ENCODE measurements at regions of chr7 and their contacts with region 1.

Region 1: DNA sequence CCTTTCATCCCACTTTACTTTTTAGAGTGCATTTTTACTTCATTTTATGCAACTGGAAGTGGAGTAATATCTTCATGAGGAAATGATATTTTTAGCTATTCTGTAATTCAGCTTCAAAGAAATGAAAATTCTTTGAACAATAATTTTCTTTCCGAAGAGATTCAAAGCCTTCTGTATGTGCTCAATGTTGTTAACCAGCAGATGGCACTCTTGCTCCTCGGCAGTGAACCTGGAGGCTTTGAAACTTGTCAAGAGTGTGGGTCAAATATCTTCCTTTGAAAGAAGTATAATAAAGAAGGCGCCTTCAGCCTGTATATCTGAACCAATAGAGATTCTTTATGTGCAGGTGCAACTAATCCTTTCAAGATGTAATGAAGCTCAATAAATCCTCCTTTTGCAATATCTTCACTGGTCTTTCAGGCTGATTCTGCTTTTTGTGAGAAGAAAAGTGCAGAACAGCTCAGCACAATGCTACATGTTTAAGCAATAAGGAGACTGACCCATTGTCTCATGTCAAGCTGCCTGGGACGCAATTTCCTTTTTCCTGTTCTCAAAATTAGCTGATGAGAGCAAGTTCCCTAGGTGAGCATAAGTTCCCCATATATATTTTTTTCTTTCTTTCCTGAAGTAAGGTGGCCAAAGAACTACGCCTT is 258.4 kb downstream of the SEMA3A start:
- DNase-seq: peak; percentile 19 to 81
- ATAC-seq: peak; percentile 85 to 91; a peak in 5 of 6 replicates
- H3K4me3 ChIP-seq: no peak overlapping the region
- H3K27ac ChIP-seq: peak overlapping the region in 1 of 2 experiments; percentile 7; a peak in 1 of 6 replicates
- H3K4me1 ChIP-seq: no peaks in the 10 kb centered on the region
- CTCF ChIP-seq: peak; percentile 98
- EP300 ChIP-seq: no peak
- POLR2A ChIP-seq: no peak
- RAD21 ChIP-seq: peak; percentile 97

Region 2: GRCh38 chr7:83672157-83672556 is 264.0 kb before region 1 on chr7:
- CTCF ChIA-PET with region 1: no interaction called
- POLR2A ChIA-PET with region 1: no interaction called
- DNase-seq: no peak
- ATAC-seq: no peak
- H3K4me3 ChIP-seq: no peak overlapping the region
- H3K27ac ChIP-seq: no peak overlapping the region
- H3K4me1 ChIP-seq: peaks cover 8% of the 10 kb centered on the region
- CTCF ChIP-seq: no peak
- EP300 ChIP-seq: no peak
- POLR2A ChIP-seq: no peak
- RAD21 ChIP-seq: no peak

Region 3: DNA sequence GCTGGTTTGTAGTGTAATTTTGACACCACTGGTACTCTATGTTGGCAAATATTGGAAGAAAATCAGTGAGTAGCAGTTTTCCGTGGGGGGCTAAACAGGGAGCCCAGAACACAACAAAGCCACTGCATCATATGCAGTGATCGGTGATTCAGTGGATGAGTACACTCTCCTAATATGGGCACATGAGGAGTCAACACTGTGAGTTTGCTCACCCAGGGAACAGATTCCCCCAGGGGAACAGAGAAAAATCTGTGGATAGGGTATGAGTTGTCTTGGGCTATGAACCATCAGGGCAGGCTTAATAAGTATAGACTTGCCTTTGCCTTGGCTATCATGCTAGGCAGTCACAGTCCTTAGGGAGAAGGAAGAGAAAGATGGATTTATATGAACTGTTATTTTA is 59.6 kb before region 1 on chr7:
- CTCF ChIA-PET with region 1: no interaction called
- POLR2A ChIA-PET with region 1: no interaction called
- DNase-seq: no peak
- ATAC-seq: no peak
- H3K4me3 ChIP-seq: no peak overlapping the region
- H3K27ac ChIP-seq: no peak overlapping the region
- H3K4me1 ChIP-seq: no peaks in the 10 kb centered on the region
- CTCF ChIP-seq: no peak
- EP300 ChIP-seq: no peak
- POLR2A ChIP-seq: no peak
- RAD21 ChIP-seq: no peak

Region 4: GRCh38 chr7:83957333-83957732 is 21.2 kb after region 1 on chr7:
- CTCF ChIA-PET with region 1: interaction called, 22 read pairs
- POLR2A ChIA-PET with region 1: no interaction called
- DNase-seq: peak in 1 of 2 experiments; percentile 9
- ATAC-seq: no peak
- H3K4me3 ChIP-seq: no peak overlapping the region
- H3K27ac ChIP-seq: no peak overlapping the region
- H3K4me1 ChIP-seq: no peaks in the 10 kb centered on the region
- CTCF ChIP-seq: no peak
- EP300 ChIP-seq: no peak
- POLR2A ChIP-seq: no peak
- RAD21 ChIP-seq: no peak

Region 5: DNA sequence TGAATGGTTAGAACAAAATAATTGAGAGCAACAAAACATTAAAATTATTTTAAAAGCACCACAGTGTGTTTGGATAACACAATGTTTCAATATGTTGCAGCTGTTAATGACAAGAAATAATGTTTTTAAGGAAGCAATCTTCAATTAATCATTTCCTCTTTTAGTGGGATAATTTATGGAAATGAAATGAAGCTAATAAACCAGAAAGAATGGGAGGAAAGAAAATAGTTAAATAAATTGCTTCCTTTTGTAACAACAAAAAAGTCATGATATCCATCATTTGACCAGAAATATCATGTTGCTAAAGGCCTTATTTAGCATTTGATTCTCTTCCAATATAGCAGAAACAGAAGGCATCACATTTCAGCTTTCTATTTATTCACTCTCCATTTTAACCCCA is 33.9 kb after region 1 on chr7:
- CTCF ChIA-PET with region 1: interaction called, 15 read pairs
- POLR2A ChIA-PET with region 1: no interaction called
- DNase-seq: no peak
- ATAC-seq: no peak
- H3K4me3 ChIP-seq: no peak overlapping the region
- H3K27ac ChIP-seq: no peak overlapping the region
- H3K4me1 ChIP-seq: no peaks in the 10 kb centered on the region
- CTCF ChIP-seq: no peak
- EP300 ChIP-seq: no peak
- POLR2A ChIP-seq: no peak
- RAD21 ChIP-seq: no peak

Region 6: DNA sequence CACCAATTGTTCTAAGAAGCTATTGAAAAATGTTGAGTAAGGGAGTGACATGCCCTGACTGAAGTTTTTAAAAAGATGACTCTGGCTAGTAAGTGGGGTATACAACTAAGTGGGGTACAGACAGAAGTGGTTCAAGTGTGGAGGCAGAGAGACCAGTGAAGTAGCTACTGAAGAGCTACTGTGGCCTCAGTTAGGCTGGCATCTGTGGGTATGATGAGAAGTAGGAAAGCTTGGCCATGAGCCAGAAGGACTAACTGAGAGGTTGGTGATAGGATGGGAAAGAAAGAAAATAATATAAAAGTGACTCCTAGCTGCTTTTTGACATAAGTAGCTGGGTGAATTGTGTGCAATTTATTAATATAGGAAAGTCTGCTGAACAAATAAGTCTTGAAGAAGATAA is 1074.1 kb after region 1 on chr7:
- CTCF ChIA-PET with region 1: interaction called, 28 read pairs
- POLR2A ChIA-PET with region 1: no interaction called
- DNase-seq: no peak
- ATAC-seq: no peak
- H3K4me3 ChIP-seq: no peak overlapping the region
- H3K27ac ChIP-seq: no peak overlapping the region
- H3K4me1 ChIP-seq: 0 out of 3 replicates have a peak, but pooled peaks cover 3% of the 10 kb centered on the region
- CTCF ChIP-seq: no peak
- EP300 ChIP-seq: no peak
- POLR2A ChIP-seq: no peak
- RAD21 ChIP-seq: no peak

Region 7: DNA sequence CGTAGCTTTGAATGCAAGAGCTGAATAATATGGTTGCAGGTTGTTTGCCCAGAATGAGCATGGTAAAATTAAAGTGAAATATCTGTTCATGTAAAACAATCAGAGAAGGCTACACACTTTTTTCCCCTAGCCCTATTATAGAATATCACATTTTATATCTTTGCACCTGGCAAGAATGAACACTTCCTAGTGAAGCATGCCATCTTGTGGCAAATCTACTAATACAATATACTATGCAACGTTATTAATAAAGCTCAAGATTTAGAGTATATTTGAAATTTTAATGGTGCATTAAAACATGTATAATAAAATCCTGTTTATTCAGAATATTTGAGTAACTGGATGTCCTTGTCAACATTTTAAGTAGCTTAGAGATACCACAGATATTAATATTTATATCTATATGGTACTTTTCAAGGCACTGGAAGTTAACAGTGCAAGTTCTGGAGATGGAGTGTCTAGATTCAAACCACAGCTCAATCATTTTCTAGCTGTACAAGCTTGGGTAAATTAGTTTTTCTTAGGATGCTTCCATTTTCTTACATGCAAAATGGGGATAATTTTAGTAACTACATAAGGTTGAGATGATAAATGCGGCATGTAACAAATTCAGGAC is 1893.7 kb after region 1 on chr7:
- CTCF ChIA-PET with region 1: interaction called, 11 read pairs
- POLR2A ChIA-PET with region 1: no interaction called
- DNase-seq: peak in 1 of 2 experiments; percentile 27
- ATAC-seq: peak; percentile 74 to 79; a peak in 4 of 6 replicates
- H3K4me3 ChIP-seq: no peak overlapping the region
- H3K27ac ChIP-seq: no peak overlapping the region
- H3K4me1 ChIP-seq: no peaks in the 10 kb centered on the region
- CTCF ChIP-seq: peak; percentile 78
- EP300 ChIP-seq: no peak
- POLR2A ChIP-seq: no peak
- RAD21 ChIP-seq: peak; percentile 84 to 87